ENCODE measurements at regions of chr20 and their contacts with region 1.

Region 1: GRCh38 chr20:815914-816606 is 17.5 kb upstream of the FAM110A start:
- DNase-seq: peak; percentile 74
- H3K4me3 ChIP-seq: no peak overlapping the region
- H3K27ac ChIP-seq: no peak overlapping the region
- H3K4me1 ChIP-seq: no peaks in the 10 kb centered on the region
- CTCF ChIP-seq: peak; percentile 97

Region 2: GRCh38 chr20:719816-720215 is 96.2 kb before region 1 on chr20:
- CTCF ChIA-PET with region 1: no interaction called
- POLR2A ChIA-PET with region 1: no interaction called
- intact Hi-C with region 1: no loop called
- DNase-seq: no peak
- H3K4me3 ChIP-seq: no peak overlapping the region
- H3K27ac ChIP-seq: no peak overlapping the region
- H3K4me1 ChIP-seq: no peaks in the 10 kb centered on the region
- CTCF ChIP-seq: no peak

Region 3: GRCh38 chr20:884983-885952 is 69.2 kb after region 1 on chr20:
- CTCF ChIA-PET with region 1: no interaction called
- POLR2A ChIA-PET with region 1: no interaction called
- intact Hi-C with region 1: loop called (anchors 10 kb)
- DNase-seq: no peak
- H3K4me3 ChIP-seq: no peak overlapping the region
- H3K27ac ChIP-seq: no peak overlapping the region
- H3K4me1 ChIP-seq: no peaks in the 10 kb centered on the region
- CTCF ChIP-seq: no peak

Region 4: GRCh38 chr20:956330-956951 is 140.4 kb after region 1 on chr20:
- CTCF ChIA-PET with region 1: interaction called, 3 read pairs
- POLR2A ChIA-PET with region 1: no interaction called
- intact Hi-C with region 1: loop called (anchors 1 kb)
- DNase-seq: peak; percentile 73
- H3K4me3 ChIP-seq: no peak overlapping the region
- H3K27ac ChIP-seq: no peak overlapping the region
- H3K4me1 ChIP-seq: no peaks in the 10 kb centered on the region
- CTCF ChIP-seq: peak; percentile 96

Region 5: DNA sequence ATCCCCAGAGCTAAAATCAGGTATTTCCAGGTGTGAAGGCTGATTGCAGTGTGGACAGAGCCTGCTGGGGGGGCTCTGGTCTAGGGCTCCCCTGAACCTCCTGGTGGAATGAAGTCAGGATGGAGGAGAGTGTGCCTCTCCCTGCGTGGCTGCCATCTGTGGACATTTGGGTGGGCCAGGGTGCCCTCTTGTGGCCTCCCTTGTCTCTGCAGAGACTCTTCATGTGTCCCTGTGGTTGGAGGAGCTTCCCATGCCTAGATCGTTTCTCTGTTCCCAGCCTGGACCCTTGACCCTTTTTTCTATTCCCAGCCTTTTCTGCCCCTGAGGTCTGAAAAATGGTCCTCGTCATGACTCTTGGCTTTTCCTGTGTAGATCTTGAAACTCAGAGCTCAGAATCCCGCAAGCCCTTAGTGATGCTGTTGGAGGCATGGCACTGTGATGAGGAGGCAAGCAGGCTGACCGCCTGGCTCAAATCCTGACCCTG is 292.4 kb after region 1 on chr20:
- CTCF ChIA-PET with region 1: no interaction called
- POLR2A ChIA-PET with region 1: no interaction called
- intact Hi-C with region 1: loop called (anchors 10 kb)
- DNase-seq: peak; percentile 44
- H3K4me3 ChIP-seq: no peak overlapping the region
- H3K27ac ChIP-seq: no peak overlapping the region
- H3K4me1 ChIP-seq: no peaks in the 10 kb centered on the region
- CTCF ChIP-seq: peak; percentile 85

Region 6: DNA sequence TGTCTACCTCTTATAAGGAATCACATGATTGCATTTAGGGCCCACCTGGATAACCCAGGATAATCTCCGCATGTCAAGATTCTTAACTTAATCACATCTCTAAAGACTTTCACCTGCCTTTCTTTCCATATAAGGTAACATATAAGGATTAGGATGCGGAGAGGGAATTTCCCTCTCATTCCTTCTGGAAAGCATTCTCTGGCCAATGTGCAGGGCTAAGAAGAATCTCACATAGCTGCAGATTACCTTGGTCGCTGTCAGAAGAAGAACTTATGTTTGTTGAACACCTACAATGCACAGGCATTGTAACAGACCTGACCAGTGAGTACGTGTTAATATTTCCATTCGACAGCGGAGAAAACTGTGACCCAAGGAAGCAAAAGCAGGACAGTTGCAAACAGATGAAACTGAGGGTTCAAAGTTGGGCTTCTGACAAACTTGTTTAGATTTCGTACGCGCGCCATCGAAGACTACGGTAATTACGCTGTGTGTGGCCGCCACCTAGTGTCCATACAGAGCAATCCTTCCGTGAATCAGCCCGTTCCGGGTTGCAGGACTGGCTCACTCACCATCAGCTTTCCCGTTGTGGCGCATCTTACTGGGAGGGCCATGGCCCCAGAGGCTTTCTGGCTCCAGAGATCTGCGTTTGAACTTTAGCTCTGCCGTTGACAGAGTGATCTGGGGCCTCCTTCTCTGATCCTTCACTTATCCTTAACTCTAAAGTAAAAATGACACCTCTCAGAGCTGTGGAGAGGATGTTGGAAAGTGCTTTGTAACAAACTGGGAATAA is 396.7 kb after region 1 on chr20:
- CTCF ChIA-PET with region 1: no interaction called
- POLR2A ChIA-PET with region 1: no interaction called
- intact Hi-C with region 1: loop called (anchors 10 kb)
- DNase-seq: peak; percentile 56
- H3K4me3 ChIP-seq: no peak overlapping the region
- H3K27ac ChIP-seq: no peak overlapping the region
- H3K4me1 ChIP-seq: no peaks in the 10 kb centered on the region
- CTCF ChIP-seq: peak; percentile 83